Adrenal gland (tissue), 19 donors: ENCODE measurements at regions of chr9 and their contacts with region 1.

Region 1: DNA sequence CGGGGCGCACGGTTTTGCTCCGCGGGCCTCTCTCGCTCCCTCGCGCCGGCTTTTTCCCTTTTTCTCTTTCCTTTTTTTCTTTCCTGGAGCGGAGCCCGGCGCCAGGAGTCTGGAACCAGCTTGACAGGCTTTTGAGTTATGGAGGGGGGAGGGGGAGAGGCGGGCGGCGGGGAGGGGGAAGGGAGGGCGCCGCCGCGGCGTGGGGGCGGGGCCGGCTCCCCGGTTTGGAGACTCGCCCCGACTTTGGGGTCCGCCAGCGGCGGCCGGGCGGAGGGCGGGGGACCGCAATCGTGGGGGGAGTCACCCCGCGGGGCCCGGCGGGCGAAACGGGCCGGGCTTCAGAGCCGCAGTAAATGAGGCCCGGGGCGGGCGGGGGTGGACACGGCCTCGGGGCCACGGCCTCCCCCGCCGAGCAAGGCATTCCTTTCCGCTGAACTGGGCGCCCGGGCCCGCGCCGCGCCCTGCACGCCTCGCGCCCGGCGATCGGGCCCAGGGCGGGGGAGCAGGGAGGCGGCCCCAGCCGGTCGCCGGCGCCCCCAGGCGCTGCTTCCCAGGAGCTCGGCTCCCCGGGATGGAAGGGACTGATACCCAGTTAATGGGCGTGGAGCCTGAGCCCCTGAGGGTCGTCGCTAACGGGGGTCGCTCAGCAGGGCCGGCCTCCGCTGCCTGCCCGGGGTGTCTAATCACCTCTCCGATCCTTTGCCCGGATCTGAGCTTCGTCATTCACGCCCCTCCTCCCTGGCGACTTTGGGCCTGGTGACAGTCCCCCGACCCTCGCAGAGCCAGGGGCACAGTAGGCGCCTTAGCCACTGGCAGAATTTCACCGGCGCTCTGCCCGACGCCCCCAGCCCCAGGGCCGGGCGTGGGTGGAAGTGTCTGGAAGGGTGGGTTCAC is 138.1 kb downstream of the C9orf50 start:
- DNase-seq: peak; percentile 92 to 95 (median 94)
- H3K4me3 ChIP-seq: peak overlapping the region in 2 of 4 donors; percentile 57 to 65
- H3K27ac ChIP-seq: peak overlapping the region; percentile 99 to 100 (median 100)
- H3K4me1 ChIP-seq: peaks cover 68 to 92% of the 10 kb centered on the region in 2 donors
- H3K27me3 ChIP-seq: no peaks in the 10 kb centered on the region
- CTCF ChIP-seq: peak in 1 of 6 experiments; percentile 12
- POLR2A ChIP-seq: peak in 1 of 2 donors; percentile 30

Region 2: GRCh38 chr9:129028192-129028957 is 454.4 kb before region 1 on chr9 and contains the start of gene SH3GLB2:
- intact Hi-C with region 1: no loop called
- DNase-seq: peak; percentile 94 to 99 (median 96)
- H3K4me3 ChIP-seq: peak within 1 kb of the TSS; percentile 4 to 91 (median 42)
- H3K27ac ChIP-seq: peak within 1 kb of the TSS in 3 of 5 donors; percentile 42 to 87 (median 63)
- H3K4me1 ChIP-seq: peaks cover 16 to 29% of the 10 kb centered on the region in 2 donors
- H3K27me3 ChIP-seq: no peaks in the 10 kb centered on the region
- CTCF ChIP-seq: peak; percentile 58 to 91 (median 75)
- POLR2A ChIP-seq: peak in 1 of 2 donors; percentile 48
- total RNA-seq, gene SH3GLB2: 50.3 to 153 (median 96.8) TPM

Region 3: DNA sequence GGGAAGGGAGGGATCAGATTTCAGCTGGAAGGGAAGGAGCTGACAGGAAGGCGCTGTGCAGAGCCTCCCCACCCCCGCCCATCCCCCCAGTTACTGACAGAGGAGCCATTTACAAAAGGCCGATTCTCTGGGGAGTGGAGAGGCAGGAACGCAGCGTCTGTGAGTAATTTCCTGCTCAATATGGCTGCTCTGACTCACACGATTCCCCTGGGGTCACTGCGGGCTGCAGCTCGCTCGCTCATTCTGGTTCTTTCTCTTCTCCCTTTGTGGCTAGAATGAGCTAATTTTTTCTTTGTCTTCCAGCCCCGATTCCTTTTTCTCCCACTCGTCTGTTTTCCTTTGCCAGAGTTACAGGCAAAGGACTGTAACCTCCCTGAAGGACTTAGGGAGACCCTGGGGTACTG is 342.8 kb before region 1 on chr9:
- intact Hi-C with region 1: loop called in 1 of 2 experiments (anchors 10 kb)
- DNase-seq: peak; percentile 90 to 98 (median 97)
- H3K4me3 ChIP-seq: peak overlapping the region in 3 of 4 donors; percentile 26 to 50 (median 45)
- H3K27ac ChIP-seq: peak overlapping the region; percentile 98 to 100 (median 100)
- H3K4me1 ChIP-seq: peaks cover 57 to 78% of the 10 kb centered on the region in 2 donors
- H3K27me3 ChIP-seq: no peaks in the 10 kb centered on the region
- CTCF ChIP-seq: no peak
- POLR2A ChIP-seq: peak; percentile 20 to 83

Region 4: DNA sequence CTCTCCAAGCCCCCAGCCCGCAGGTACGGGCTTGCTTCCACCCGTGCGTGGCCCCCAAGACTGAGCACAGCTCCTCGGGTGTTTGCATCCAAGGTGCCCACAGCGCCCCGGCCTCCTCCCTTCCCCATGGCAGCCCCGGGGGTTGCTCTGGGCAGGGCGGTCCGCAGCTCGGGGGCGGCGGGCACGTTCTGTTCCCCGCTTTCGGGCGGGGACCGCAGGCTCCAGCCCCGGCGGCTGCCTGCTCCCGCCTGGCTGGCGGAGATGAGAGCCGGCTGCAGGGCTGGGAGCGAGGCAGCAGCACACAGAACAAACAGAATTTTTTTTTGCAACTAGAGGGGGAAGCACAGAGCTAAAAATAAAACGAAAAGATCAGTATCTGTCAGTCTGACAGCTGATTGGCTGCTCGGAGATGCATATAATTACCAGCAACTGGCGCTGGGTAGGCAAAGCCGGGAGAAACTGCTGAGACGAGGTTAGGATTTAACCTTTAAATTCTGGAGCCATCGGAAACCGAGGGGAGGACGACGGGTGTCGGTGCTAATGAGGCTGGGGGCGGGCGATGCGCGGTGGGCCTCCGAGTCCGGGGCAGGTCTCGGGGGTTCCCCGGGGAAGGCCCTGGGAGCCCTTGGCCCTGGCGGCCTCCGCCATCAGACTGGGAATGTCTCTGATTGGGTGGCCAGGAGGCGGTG is 162.0 kb before region 1 on chr9:
- intact Hi-C with region 1: loop called (anchors 10 kb)
- DNase-seq: peak; percentile 58 to 90 (median 80)
- H3K4me3 ChIP-seq: peak overlapping the region in 2 of 4 donors; percentile 15 to 46
- H3K27ac ChIP-seq: peak overlapping the region in 4 of 5 donors; percentile 72 to 92 (median 82)
- H3K4me1 ChIP-seq: peaks cover 24 to 82% of the 10 kb centered on the region in 2 donors
- H3K27me3 ChIP-seq: no peaks in the 10 kb centered on the region
- CTCF ChIP-seq: peak in 5 of 6 experiments; percentile 26 to 36 (median 34)
- POLR2A ChIP-seq: peak; percentile 49 to 85

Region 5: DNA sequence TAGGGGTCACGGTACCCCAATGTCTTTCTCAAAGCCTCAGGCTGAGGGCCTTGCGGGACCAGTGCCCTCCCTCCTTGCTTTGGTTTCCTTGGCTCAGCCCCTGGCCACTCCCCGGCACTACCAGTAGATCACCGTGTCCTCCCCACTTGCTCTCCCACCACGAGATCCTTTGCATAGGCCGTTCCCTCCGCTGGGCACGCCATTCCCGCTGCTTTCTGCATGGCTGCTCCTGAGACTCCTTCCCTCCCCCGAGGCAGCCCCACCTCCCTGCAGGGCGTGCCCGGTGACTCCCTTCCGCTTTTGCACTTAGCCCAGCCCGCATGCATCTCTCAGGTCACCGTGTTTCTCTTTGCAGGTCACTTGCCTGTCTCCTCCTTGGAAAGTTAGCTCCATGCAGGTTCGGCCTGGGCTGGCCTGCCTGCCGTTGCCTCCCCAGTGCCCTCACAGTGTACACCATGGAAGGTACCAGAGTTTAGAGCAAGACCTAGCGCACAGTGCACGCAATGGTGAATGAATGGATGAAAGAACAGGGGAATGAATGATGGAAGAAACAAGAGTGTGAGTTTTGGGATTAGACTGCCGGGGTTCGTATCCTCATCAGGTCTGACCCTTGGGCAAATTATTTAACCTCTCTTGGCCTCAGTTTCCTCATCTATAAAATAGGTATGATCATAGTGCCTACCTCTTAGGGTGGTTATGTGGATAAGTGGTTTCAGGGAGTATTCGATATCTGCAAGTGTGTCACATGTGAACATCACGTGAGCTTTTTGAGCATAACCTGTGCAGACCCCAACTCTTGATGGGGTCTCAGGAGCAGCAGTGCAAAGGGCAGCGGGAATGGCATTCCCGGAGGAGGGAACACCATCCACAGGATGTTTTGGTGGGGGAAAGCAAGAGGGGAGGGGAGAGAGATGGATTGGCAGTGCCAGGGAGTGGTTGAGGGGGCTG is 76.2 kb before region 1 on chr9:
- intact Hi-C with region 1: no loop called
- DNase-seq: no peak
- H3K4me3 ChIP-seq: no peak overlapping the region
- H3K27ac ChIP-seq: no peak overlapping the region
- H3K4me1 ChIP-seq: peaks cover 0 to 11% of the 10 kb centered on the region in 2 donors
- H3K27me3 ChIP-seq: no peaks in the 10 kb centered on the region
- CTCF ChIP-seq: no peak
- POLR2A ChIP-seq: no peak

Region 6: GRCh38 chr9:129550199-129550839 is 67.6 kb after region 1 on chr9:
- intact Hi-C with region 1: no loop called
- DNase-seq: peak; percentile 82 to 91 (median 84)
- H3K4me3 ChIP-seq: peak overlapping the region in 1 of 4 donors; percentile 50
- H3K27ac ChIP-seq: peak overlapping the region in 4 of 5 donors; percentile 4 to 84 (median 58)
- H3K4me1 ChIP-seq: peaks cover 20 to 29% of the 10 kb centered on the region in 2 donors
- H3K27me3 ChIP-seq: no peaks in the 10 kb centered on the region
- CTCF ChIP-seq: no peak
- POLR2A ChIP-seq: no peak

Region 7: DNA sequence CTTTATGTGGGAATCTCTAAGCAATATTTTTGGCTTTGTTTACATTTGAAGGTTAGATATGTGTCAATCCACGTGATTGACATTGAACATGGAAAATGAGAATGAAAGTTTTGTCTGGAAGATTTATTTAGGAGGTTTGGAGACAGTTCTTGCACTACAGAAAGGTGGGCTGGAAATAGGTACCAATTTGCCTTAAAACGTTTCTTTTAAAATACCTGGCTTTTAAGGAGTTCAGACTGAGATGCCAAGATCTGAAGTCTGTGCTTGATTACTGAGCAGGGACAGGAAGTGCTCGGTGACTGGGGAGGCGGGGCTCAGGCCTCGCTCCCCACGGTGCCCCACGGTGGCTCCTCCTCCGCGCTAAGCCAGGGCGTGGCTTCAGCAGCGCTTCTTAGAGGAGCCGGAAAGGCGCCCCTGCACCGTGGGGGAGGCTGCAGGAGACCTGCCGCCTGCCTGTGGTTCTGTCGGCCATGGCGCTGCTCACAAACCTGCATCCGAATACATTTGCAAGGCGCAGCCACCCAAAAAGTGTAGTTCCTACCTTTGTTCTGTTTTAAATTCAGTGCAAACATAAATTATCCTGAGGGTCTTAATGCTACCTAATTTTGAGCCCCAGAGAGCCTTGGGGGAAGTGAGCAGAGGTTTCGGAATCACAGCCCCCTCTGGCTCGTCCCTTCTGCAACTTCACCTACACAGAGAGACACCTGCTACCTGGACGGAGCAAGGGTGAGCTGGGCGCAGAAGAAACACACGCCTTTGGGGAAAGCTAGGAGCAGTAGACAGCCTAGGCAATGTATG is 401.7 kb after region 1 on chr9:
- intact Hi-C with region 1: no loop called
- DNase-seq: peak; percentile 84 to 93 (median 91)
- H3K4me3 ChIP-seq: peak overlapping the region in 2 of 4 donors; percentile 34 to 48
- H3K27ac ChIP-seq: peak overlapping the region in 4 of 5 donors; percentile 60 to 82 (median 74)
- H3K4me1 ChIP-seq: peaks cover 16 to 42% of the 10 kb centered on the region in 2 donors
- H3K27me3 ChIP-seq: no peaks in the 10 kb centered on the region
- CTCF ChIP-seq: peak in 1 of 6 experiments; percentile 4
- POLR2A ChIP-seq: peak in 1 of 2 donors; percentile 64